ENCODE measurements at regions of chr20 and their contacts with region 1.

Region 1: DNA sequence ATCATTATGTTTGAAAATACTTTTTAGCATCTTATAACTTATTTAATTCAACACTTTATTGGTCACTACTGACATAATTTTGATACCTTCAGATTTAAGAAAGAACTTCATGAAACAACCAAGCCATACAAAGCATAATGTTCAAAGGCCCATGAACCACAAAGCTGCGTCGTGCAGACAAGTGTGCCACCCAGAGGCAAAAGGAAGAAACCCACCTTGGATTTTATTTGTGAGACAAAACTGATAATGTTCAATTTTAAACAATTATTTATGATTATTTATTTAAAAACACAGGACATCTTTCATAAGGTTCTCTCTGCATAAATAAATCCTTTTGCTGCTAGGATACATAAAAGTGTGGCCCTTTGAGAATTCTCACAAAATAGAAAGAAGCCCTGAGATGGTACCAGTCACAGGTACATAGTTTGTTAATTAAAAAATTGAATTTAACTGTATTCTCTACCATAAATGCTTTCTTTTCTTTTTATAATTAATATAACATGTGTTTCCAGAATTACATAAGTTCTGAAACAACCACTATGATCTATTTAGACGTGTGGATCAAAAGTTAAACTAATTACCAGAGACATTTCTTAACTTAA is 143.7 kb downstream of the RALGAPA2 start:
- DNase-seq: no peak
- ATAC-seq: no peak
- H3K4me3 ChIP-seq: no peak overlapping the region
- H3K27ac ChIP-seq: no peak overlapping the region
- H3K4me1 ChIP-seq: no peaks in the 10 kb centered on the region
- H3K27me3 ChIP-seq: no peaks in the 10 kb centered on the region

Region 2: DNA sequence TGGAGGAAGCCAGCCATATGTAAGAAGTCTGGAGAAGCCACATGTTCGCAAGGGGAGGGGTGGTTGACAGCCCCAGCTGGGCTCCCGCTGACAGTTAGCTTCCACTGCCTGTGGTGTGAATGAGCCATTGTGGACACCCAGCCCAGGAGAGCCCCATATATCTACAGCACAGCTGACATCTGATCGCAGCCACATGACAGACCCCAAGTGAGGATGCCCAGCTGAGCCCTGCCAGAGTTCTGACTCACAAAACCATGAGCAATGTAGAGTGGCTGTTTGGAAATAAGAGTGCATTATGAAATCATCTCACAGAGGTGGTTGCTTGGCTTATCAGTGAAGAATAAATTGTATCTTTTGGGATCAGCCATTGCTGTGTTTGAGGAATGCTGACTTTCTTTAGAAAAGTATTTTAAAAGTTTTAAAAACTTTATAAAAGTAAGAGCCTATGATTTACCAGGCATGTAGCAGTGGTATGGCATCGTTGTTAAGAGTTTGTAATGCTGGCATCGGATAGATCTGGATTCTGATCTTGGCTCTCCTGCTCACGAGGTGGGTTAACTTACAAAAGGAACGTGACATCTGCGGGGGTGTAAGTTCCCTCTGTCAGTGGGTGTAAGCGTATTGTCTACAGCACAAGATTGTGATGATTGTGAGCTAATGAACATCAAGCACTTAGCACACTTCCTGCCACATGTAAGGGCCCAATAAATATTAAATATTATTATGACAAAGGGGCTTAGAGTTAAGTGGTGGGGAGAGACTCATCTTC is 492.2 kb before region 1 on chr20:
- intact Hi-C with region 1: loop called (anchors 10 kb)
- DNase-seq: no peak
- ATAC-seq: no peak
- H3K4me3 ChIP-seq: no peak overlapping the region
- H3K27ac ChIP-seq: no peak overlapping the region
- H3K4me1 ChIP-seq: no peaks in the 10 kb centered on the region
- H3K27me3 ChIP-seq: no peaks in the 10 kb centered on the region

Region 3: GRCh38 chr20:20083807-20084206 is 484.9 kb before region 1 on chr20:
- intact Hi-C with region 1: loop called (anchors 10 kb)
- DNase-seq: no peak
- ATAC-seq: no peak
- H3K4me3 ChIP-seq: no peak overlapping the region
- H3K27ac ChIP-seq: no peak overlapping the region
- H3K4me1 ChIP-seq: no peaks in the 10 kb centered on the region
- H3K27me3 ChIP-seq: no peaks in the 10 kb centered on the region